Right ventricle myocardium inferior (tissue), 1 donor: ENCODE measurements at regions of chr7 and their contacts with region 1.

Region 1: GRCh38 chr7:42911454-42912447 is at the start of gene C7orf25:
- DNase-seq: peak; percentile 98
- ATAC-seq: peak; percentile 99
- total RNA-seq, gene C7orf25: 4.2 TPM

Region 2: DNA sequence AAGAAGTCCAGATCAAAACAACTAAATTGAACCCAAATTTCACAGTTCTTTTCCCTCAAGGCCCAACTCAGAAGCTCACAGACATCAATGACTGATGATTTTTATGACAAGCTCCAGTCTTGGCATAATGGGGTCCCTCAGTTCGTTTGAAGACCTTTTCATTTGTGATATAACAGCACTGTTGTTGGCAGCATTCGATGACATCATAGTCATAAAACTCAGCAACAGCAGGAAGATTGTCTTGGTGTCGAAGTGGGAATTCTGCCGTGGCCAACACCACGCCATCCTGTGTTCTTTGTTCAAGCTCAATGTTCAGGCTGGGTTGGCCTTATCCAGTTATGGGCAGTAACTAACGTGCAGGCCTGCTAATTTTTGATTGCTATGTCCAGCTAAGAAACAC is 261.6 kb before region 1 on chr7:
- intact Hi-C with region 1: no loop called
- DNase-seq: no peak
- ATAC-seq: no peak

Region 3: DNA sequence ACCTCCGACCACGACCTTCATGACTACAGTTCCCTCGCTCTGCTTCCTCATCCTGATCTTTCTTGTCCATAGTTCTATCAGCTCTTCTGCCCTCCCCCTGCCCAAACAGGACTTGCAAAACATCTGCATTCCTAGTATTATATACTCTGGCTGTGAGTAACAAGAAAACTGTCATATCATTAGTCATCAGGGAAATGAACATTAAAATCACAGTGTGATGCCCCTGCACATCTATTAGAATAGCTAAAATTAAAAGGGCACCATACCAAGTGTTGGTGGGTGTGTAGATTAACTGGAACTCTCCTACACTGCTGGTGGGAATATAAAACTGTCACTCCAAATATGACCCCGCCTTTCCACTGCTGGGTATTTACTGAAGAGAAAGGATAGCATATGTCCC is 141.6 kb before region 1 on chr7:
- intact Hi-C with region 1: no loop called
- DNase-seq: no peak
- ATAC-seq: no peak

Region 4: GRCh38 chr7:42931834-42932651 is 20.3 kb after region 1 on chr7 and contains the starts of genes MRPL32 and PSMA2:
- intact Hi-C with region 1: loop called (anchors 2 kb)
- DNase-seq: peak; percentile 98
- ATAC-seq: peak; percentile 100
- total RNA-seq, gene MRPL32: 66.8 TPM
- total RNA-seq, gene PSMA2: 81.7 TPM